Ascending aorta (tissue), 2 donors: ENCODE measurements at regions of chr1 and their contacts with region 1.

Region 1: DNA sequence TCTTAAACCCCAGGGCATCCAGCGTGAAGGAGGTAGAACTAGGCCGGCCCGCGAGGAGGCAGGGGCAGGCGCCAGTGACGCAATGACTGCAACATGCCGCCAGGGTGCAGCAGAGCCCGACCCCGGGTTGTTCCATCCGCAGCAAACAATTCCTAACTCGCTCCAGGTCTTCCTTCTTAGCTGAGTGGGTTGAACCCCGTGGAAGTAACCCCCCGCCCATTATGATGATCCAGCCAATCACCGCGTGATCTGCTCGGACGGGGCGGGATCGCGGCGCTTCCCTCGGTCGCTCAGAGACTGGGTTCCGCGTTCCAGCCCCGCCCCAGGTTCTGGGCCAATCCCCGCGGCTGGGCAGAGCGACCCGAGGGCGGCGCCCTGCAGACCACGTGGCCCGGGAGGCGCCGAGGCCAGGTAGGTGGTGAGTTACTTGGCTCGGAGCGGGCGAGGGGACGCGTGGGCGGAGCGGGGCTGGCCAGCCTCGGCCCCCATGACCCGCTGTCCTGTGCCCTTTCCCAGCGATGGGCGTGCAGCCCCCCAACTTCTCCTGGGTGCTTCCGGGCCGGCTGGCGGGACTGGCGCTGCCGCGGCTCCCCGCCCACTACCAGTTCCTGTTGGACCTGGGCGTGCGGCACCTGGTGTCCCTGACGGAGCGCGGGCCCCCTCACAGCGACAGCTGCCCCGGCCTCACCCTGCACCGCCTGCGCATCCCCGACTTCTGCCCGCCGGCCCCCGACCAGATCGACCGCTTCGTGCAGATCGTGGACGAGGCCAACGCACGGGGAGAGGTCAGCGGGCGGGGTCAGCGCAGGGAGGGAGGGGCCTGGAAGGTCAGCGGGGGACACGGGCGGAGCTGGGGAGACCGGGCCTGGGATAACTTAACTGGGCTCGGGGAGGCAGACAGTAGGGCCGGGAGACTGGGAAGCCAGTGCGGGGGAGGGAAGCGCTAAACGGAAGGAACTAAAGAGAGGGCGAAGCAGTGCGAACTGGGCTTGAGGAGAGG is at the start of gene DUSP23:
- DNase-seq: peak; percentile 90 to 99
- H3K4me3 ChIP-seq: peak within 1 kb of the TSS; percentile 73 to 94
- H3K27ac ChIP-seq: peak within 1 kb of the TSS; percentile 73 to 79
- H3K4me1 ChIP-seq: peaks cover 3 to 14% of the 10 kb centered on the region in 2 donors
- H3K27me3 ChIP-seq: no peaks in the 10 kb centered on the region
- CTCF ChIP-seq: peak; percentile 92 to 95 (median 93)
- total RNA-seq, gene DUSP23: 549 TPM

Region 2: GRCh38 chr1:159854693-159855192 is 73.9 kb after region 1 on chr1:
- intact Hi-C with region 1: loop called (anchors 2 kb)
- DNase-seq: peak; percentile 32 to 92
- H3K4me3 ChIP-seq: peak overlapping the region; percentile 78 to 92
- H3K27ac ChIP-seq: peak overlapping the region; percentile 98
- H3K4me1 ChIP-seq: peaks cover 0 to 8% of the 10 kb centered on the region in 2 donors
- H3K27me3 ChIP-seq: no peaks in the 10 kb centered on the region
- CTCF ChIP-seq: peak in 1 of 3 experiments; percentile 22

Region 3: GRCh38 chr1:159900086-159900680 is 119.3 kb after region 1 on chr1 and contains the start of gene CFAP45:
- intact Hi-C with region 1: loop called (anchors 2 kb)
- DNase-seq: peak; percentile 71 to 91
- H3K4me3 ChIP-seq: peak within 1 kb of the TSS in 1 of 2 donors; percentile 17
- H3K27ac ChIP-seq: peak within 1 kb of the TSS; percentile 51 to 66
- H3K4me1 ChIP-seq: peaks cover 3 to 10% of the 10 kb centered on the region in 2 donors
- H3K27me3 ChIP-seq: no peaks in the 10 kb centered on the region
- CTCF ChIP-seq: no peak
- total RNA-seq, gene CFAP45: not detected

Region 4: GRCh38 chr1:159945483-159946241 is 164.8 kb after region 1 on chr1 and contains the start of gene IGSF9:
- intact Hi-C with region 1: loop called (anchors 2 kb)
- DNase-seq: peak in 1 of 2 donors; percentile 89
- H3K4me3 ChIP-seq: peak within 1 kb of the TSS; percentile 51 to 58
- H3K27ac ChIP-seq: no peak within 1 kb of the TSS
- H3K4me1 ChIP-seq: peaks cover 0 to 11% of the 10 kb centered on the region in 2 donors
- H3K27me3 ChIP-seq: no peaks in the 10 kb centered on the region
- CTCF ChIP-seq: peak; percentile 45 to 73 (median 64)
- total RNA-seq, gene IGSF9: 0.11 TPM

Region 5: DNA sequence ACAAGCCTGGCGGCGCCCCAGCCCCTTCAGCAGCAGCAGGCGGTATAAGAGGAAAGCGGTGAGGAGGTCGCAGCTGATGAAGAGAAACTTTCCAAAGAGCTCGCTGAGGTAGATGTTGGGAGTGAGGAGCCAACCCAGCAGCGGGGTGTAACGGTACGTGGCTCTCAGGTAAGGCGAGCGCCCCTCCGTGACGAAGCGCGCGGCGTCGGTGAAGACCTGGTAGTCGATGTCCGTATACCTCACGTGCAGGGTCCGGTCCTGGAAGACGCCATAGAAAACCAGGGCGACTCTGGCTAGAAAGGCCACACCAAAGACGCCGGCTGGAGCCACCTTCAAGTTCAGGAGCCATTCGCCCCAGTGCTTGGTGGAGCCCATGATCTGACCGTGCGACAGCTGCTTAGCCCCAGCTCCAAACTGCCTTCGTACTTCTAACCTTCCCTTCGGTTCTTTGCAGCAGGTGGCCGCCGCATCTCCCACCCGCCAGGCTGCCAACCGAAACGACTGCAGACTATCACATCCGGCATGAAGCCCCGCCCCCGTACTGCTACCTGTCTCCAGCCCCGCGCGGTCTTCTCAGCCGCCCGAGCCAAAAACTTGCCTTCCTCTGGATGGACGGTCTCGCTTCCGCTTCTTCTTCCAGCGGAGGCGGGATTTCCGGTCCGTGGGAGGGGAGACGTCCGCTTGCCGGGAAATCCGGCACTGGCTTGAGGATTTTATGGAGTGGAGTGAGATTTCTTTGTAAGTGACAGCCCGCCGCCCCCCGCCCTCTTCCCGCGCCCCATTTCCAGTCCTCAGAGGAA is 250.7 kb after region 1 on chr1 and contains the start of gene PIGM:
- intact Hi-C with region 1: loop called (anchors 2 kb)
- DNase-seq: peak; percentile 73 to 96
- H3K4me3 ChIP-seq: peak within 1 kb of the TSS; percentile 78 to 82
- H3K27ac ChIP-seq: peak within 1 kb of the TSS; percentile 37 to 71
- H3K4me1 ChIP-seq: peaks cover 0 to 9% of the 10 kb centered on the region in 2 donors
- H3K27me3 ChIP-seq: no peaks in the 10 kb centered on the region
- CTCF ChIP-seq: no peak
- total RNA-seq, gene PIGM: 6.1 TPM